Activated CD4-positive, alpha-beta T cell treated with anti-CD3 and anti-CD28 coated beads for 36 hours (primary cell): ENCODE measurements at regions of chr12 and their contacts with region 1.

Region 1: DNA sequence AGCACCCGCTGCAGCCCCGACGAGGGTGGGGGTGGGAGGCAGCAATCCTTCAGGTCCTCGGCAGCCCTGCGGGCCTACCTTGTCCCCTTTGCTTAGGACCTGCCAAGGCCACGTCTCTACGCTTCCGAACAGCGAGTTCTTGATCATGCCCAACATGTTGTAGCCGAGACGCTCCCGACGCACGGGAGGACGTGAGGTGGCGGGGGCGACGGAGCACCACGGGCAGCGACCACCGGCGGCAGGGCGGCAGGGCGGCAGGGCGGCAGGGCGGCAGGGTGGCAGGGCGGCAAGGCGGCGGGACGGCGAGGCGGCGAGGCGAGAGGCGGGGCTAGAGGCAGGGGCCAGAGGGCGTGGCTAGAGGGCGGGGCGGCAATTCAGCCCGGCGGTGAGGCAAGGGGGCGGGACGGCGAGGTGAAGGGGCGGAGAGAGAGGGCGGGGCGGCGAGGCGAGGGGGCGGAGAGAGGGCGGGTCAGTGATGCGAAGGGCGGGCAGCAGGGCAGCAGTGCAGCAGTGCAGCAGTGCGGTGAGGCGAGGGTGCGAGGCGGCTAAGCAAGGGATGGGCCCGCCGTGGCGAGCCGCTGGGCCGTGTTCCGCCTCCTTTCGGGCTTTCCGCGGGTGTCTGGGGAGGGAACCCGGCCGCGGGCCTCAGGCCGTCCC is at the start of gene HEBP1:
- DNase-seq: peak; percentile 99
- ATAC-seq: peak; percentile 92
- H3K4me3 Mint-ChIP-seq: peak within 1 kb of the TSS; percentile 86
- H3K27ac Mint-ChIP-seq: peak within 1 kb of the TSS; percentile 75
- H3K4me1 Mint-ChIP-seq: peaks cover 28% of the 10 kb centered on the region
- H3K27me3 Mint-ChIP-seq: peaks cover 6% of the 10 kb centered on the region
- total RNA-seq, gene HEBP1: 23.5 to 28.6 TPM

Region 2: GRCh38 chr12:12716793-12717585 is 283.1 kb before region 1 on chr12 and contains the start of gene CDKN1B:
- CTCF ChIA-PET with region 1: no interaction called
- POLR2A ChIA-PET with region 1: no interaction called
- intact Hi-C with region 1: no loop called
- DNase-seq: peak; percentile 93
- ATAC-seq: peak; percentile 69
- H3K4me3 Mint-ChIP-seq: peak within 1 kb of the TSS; percentile 93
- H3K27ac Mint-ChIP-seq: peak within 1 kb of the TSS; percentile 98
- H3K4me1 Mint-ChIP-seq: peaks cover 53% of the 10 kb centered on the region
- H3K27me3 Mint-ChIP-seq: no peaks in the 10 kb centered on the region
- total RNA-seq, gene CDKN1B: 34.2 to 37.0 TPM

Region 3: GRCh38 chr12:12786716-12787601 is 213.1 kb before region 1 on chr12:
- CTCF ChIA-PET with region 1: no interaction called
- POLR2A ChIA-PET with region 1: no interaction called
- intact Hi-C with region 1: loop called in 1 of 2 experiments (anchors 1 kb)
- DNase-seq: peak; percentile 84
- ATAC-seq: peak; percentile 89
- H3K4me3 Mint-ChIP-seq: peak overlapping the region; percentile 81
- H3K27ac Mint-ChIP-seq: peak overlapping the region; percentile 90
- H3K4me1 Mint-ChIP-seq: peaks cover 28% of the 10 kb centered on the region
- H3K27me3 Mint-ChIP-seq: no peaks in the 10 kb centered on the region

Region 4: DNA sequence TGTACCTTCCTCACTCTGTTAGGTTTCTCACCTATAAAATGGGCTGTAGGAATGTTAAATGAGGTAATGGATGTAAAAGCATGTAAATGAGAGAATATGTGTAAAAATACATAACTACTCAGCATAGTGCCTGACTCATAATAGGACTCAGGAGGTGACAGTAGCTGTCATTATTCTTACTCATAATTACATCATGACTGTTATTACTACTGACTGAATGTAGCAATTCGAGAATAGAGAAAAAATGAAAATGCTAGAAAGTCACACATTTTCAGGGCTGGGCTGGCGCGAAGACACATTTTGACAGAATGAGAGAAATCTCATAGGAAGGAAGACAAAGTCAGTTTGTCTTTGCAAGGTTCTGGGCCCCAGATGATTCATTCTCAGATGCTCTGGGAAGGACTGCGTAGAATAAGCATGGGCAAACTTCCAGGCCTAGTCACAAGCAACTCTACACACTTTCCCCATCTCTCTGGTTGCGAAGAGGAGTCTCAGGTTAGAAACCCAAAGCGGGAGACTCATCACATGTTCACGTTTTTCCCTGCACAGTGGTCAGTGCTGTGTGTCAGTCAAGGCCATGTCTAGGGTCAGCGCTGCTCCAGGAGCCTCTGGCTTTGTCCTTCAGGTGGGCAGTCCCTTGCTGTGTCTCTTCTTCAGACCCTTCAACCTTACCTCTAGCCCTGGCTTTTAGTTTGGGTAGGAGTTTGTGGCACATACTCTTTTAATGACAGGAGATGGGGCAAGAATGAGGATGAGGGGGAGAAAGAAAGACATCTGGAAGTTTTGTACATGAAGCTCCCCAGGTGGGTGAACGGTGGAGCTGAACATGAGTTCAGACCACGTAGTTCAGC is 100.3 kb before region 1 on chr12:
- CTCF ChIA-PET with region 1: no interaction called
- POLR2A ChIA-PET with region 1: no interaction called
- intact Hi-C with region 1: loop called in 1 of 2 experiments (anchors 1 kb)
- DNase-seq: peak; percentile 87
- ATAC-seq: peak; percentile 87
- H3K4me3 Mint-ChIP-seq: no peak overlapping the region
- H3K27ac Mint-ChIP-seq: peak overlapping the region; percentile 88
- H3K4me1 Mint-ChIP-seq: peaks cover 39% of the 10 kb centered on the region
- H3K27me3 Mint-ChIP-seq: peaks cover 16% of the 10 kb centered on the region

Region 5: GRCh38 chr12:13044002-13044905 is 44.2 kb after region 1 on chr12 and contains the start of gene FAM234B:
- CTCF ChIA-PET with region 1: interaction called, 3 read pairs
- POLR2A ChIA-PET with region 1: interaction called, 4 read pairs
- intact Hi-C with region 1: loop called (anchors 1 to 2 kb)
- DNase-seq: peak; percentile 85
- ATAC-seq: peak; percentile 88
- H3K4me3 Mint-ChIP-seq: peak within 1 kb of the TSS; percentile 83
- H3K27ac Mint-ChIP-seq: peak within 1 kb of the TSS; percentile 77
- H3K4me1 Mint-ChIP-seq: peaks cover 27% of the 10 kb centered on the region
- H3K27me3 Mint-ChIP-seq: peaks cover 5% of the 10 kb centered on the region
- total RNA-seq, gene FAM234B: 11.1 to 12.2 TPM

Region 6: DNA sequence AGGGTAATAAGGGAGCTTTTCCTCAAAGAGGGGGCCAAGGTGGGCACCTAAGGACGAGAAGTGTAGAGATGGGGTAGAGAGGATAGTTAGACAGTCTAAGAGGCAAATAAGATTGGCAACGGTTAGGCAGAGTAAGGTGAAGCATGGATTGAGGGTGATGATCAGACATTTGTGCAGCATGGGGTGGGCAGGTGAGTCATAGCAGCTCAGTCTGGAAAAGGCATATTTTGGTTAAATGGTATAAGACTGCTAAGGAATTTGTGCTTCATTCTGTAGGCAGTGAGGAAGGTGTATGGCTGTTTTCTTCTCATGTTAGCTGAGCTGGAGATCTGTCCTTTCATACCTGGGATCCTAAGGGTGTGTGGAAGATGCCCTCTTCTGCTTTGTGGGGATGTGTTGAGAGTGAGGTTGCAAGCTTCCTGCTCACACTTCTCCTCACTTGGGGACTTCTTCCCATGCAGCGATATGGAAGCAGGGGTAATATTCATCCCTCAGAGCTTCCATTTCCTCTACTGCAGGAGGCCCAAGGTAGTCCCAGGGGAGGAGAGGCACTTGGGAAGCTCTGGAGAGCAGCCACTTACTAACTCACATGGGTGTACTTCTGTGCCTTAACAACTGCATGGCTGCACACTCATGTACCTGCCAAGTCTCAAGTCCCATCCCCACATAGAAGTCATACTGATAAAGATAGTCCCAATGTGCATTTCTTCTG is 74.5 kb after region 1 on chr12:
- CTCF ChIA-PET with region 1: no interaction called
- POLR2A ChIA-PET with region 1: no interaction called
- intact Hi-C with region 1: no loop called
- DNase-seq: no peak
- ATAC-seq: no peak
- H3K4me3 Mint-ChIP-seq: no peak overlapping the region
- H3K27ac Mint-ChIP-seq: no peak overlapping the region
- H3K4me1 Mint-ChIP-seq: no peaks in the 10 kb centered on the region
- H3K27me3 Mint-ChIP-seq: no peaks in the 10 kb centered on the region

Region 7: GRCh38 chr12:13196130-13196921 is 196.2 kb after region 1 on chr12 and contains the start of gene EMP1:
- CTCF ChIA-PET with region 1: no interaction called
- POLR2A ChIA-PET with region 1: no interaction called
- intact Hi-C with region 1: loop called in 1 of 2 experiments (anchors 1 kb)
- DNase-seq: peak; percentile 89
- ATAC-seq: peak; percentile 97
- H3K4me3 Mint-ChIP-seq: peak within 1 kb of the TSS; percentile 82
- H3K27ac Mint-ChIP-seq: peak within 1 kb of the TSS; percentile 83
- H3K4me1 Mint-ChIP-seq: peaks cover 32% of the 10 kb centered on the region
- H3K27me3 Mint-ChIP-seq: no peaks in the 10 kb centered on the region
- total RNA-seq, gene EMP1: 12.9 to 16.6 TPM